PC-9 (cell line): ENCODE measurements at regions of chr1 and their contacts with region 1.

Region 1: DNA sequence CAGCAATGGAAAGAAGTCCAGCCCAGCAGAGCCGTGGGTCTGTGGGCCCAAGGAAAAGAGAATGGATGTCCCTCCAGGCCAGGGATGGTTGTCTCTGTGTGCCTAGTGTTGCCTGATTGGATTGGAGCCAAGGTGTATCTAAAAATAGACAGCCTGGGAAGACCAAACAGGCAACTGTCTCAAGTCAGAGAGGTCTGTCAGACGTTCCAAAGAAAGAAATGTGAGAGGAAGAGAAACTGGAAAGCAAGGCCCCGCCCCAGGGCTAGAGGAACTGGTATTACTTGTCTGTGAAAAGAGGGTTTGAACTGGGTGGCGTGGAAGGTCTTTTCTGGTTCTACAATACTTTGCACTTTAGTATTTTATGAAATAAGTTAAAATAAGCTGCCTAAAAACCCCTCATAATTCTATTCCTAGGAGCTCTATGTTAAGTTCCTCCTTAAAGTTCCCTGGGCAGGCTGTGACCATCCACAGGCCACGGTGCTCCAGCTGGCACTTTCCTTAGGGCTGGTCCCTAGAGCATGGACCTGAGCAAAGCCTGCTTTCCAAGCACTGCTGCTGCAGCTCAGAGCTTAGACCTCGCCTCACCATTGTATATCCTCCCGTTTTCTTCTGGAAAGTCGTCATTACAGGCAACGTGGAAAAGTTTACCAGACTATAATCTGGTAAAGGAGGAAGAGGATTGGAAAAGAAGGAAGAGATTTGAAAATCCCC is 151.6 kb downstream of the DISC1 start:
- DNase-seq: peak; percentile 78 to 86
- H3K4me3 ChIP-seq: no peak overlapping the region; the same call in 1 of the 2 replicates
- H3K27ac ChIP-seq: peak overlapping the region; percentile 76
- H3K4me1 ChIP-seq: peaks cover 36% of the 10 kb centered on the region
- H3K27me3 ChIP-seq: no peaks in the 10 kb centered on the region
- CTCF ChIP-seq: no peak

Region 2: DNA sequence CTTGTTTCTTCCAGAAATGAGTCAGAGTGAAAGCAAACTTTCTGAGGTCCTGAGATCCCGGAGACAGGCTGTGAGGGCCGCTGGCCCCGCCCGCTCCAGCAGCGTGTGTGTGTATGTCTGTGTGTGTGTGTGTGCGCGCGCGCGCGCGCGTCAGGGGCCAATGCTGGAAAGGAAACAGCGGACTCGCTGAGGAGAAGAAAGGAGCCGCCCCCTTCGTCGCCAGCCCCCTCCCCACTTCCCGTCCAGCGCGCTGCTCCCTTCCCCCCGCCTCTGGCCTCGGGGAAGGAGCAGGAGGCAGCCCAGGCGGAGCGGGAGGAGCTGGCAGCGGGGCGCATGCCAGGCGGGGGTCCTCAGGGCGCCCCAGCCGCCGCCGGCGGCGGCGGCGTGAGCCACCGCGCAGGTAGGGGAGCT is 151.6 kb before region 1 on chr1 and contains the start of gene DISC1:
- CTCF ChIA-PET with region 1: no interaction called
- POLR2A ChIA-PET with region 1: no interaction called
- intact Hi-C with region 1: loop called (anchors 5 kb)
- DNase-seq: peak; percentile 84 to 93
- H3K4me3 ChIP-seq: peak within 1 kb of the TSS; percentile 84
- H3K27ac ChIP-seq: no peak within 1 kb of the TSS
- H3K4me1 ChIP-seq: peaks cover 13% of the 10 kb centered on the region; the same call in 1 of the 2 replicates
- H3K27me3 ChIP-seq: no peaks in the 10 kb centered on the region
- CTCF ChIP-seq: no peak
- total RNA-seq, gene DISC1: 7.4 and 12.1 TPM in 2 replicates

Region 3: DNA sequence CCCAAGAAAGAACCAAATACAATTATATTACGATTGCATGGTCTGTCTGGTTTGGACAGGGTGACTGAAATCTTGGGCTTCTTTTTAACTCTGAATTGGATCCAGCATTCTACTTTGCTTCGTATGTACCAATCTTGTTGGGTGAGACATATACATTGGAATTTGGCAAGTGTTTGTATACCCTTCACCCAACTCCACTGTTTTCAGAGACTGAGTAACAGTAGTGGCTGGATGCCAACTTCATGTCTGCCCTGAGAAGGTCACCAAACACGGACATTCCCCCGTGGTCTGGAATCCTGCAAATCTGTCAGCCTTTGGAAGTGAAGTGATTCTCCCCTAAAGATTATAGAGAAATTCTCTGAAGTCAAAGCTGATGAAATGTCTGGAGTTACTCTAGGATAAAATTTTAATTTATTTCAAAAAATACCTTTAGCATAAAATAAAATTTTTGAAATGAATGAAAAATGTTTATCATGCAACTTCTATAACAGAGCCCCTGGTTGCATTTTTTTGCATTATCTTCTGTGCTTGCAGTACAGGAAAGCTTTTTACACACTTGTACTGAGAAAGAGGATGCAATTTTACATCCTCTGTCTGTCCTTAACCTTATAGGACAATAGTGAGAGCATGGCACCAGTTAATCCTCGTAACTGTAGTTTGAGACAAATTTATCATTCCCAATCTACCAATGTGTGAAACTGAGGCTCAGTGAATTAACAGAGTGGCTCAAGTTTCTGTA is 50.2 kb after region 1 on chr1:
- CTCF ChIA-PET with region 1: no interaction called
- POLR2A ChIA-PET with region 1: no interaction called
- intact Hi-C with region 1: loop called (anchors 2 kb)
- DNase-seq: peak; percentile 71 to 96
- H3K4me3 ChIP-seq: peak overlapping the region; percentile 19; the same call in 1 of the 2 replicates
- H3K27ac ChIP-seq: peak overlapping the region; percentile 89
- H3K4me1 ChIP-seq: peaks cover 38% of the 10 kb centered on the region
- H3K27me3 ChIP-seq: no peaks in the 10 kb centered on the region
- CTCF ChIP-seq: no peak

Region 4: DNA sequence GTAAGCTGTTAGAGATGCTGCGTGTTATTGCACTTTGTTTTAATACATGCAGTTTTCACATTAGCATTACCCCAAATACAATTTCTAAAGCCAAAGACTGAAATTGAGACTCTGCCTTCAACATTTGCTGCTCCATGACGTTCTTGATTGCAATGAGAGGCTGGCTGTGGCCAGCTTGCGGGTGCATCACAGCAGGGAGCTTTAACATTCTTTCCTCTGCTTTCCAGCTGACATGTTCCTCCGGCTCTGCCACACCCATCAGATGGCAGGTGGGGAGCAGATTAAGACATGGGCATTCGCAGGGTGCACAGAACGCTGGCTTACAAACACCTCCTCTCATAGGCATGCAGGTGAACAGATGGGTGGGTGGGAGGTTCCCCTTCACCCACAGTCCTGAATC is 162.5 kb after region 1 on chr1:
- CTCF ChIA-PET with region 1: no interaction called
- POLR2A ChIA-PET with region 1: no interaction called
- intact Hi-C with region 1: no loop called
- DNase-seq: no peak
- H3K4me3 ChIP-seq: no peak overlapping the region
- H3K27ac ChIP-seq: no peak overlapping the region
- H3K4me1 ChIP-seq: no peaks in the 10 kb centered on the region
- H3K27me3 ChIP-seq: no peaks in the 10 kb centered on the region
- CTCF ChIP-seq: no peak